Transverse colon (tissue), 4 donors: ENCODE measurements at regions of chr20 and their contacts with region 1.

Region 1: DNA sequence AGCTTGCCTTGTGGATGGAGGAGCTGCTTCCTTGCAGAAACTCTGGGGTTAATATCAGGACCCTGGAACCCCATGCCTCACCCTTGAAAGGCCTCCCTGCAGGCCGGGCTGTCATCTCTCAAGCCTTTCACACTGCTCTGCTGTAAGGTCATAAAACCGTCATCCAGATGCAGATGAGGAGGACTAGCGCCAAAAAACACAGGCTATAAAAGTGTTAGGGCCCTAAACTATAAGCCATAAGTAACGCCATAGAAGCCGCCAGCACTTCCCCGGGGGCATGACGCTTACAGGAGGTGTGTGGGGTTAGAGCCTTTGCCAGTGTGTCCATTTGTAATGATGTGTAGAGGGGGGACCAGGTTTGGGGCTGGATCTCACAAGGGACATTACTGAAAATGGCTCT is 47.6 kb downstream of the CDH4 start:
- DNase-seq: no peak
- H3K4me3 ChIP-seq: no peak overlapping the region
- H3K27ac ChIP-seq: no peak overlapping the region
- H3K4me1 ChIP-seq: peaks cover 0 to 6% (median 0%) of the 10 kb centered on the region in 4 donors
- H3K27me3 ChIP-seq: no peaks in the 10 kb centered on the region
- CTCF ChIP-seq: no peak
- EP300 ChIP-seq: no peak
- POLR2A ChIP-seq: no peak

Region 2: GRCh38 chr20:60977901-60978300 is 321.7 kb before region 1 on chr20:
- in situ Hi-C with region 1: no loop called
- intact Hi-C with region 1: no loop called
- DNase-seq: no peak
- H3K4me3 ChIP-seq: no peak overlapping the region
- H3K27ac ChIP-seq: no peak overlapping the region
- H3K4me1 ChIP-seq: no peaks in the 10 kb centered on the region
- H3K27me3 ChIP-seq: no peaks in the 10 kb centered on the region
- CTCF ChIP-seq: no peak
- EP300 ChIP-seq: no peak
- POLR2A ChIP-seq: no peak

Region 3: DNA sequence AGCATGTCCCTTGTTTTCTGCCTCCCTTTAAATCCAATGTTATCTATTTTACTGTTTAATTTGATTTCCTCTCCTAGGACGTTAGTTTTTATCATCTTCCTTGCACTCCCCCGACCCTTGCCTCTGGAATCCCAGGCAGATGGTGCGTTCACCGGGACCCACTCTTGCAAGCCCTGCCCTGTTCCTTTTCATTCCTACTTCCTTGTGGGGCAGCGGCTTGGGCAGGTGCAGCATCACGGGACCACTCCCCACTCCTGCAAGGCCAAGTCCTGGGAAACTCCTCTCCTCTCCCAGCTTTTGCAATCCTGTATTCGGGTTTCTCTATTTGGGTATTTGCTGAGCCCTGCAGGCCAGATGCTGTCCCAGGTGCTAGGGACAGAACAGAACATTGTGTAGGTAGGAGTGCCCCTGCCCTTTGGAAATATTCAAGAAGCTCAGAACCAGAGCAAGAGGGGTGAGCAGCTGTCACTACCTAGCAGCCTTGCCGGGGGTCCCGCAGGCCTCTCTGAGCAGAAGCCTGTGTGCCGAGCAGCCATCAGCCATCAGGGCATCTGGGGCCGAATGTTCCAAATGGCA is 53.3 kb before region 1 on chr20:
- in situ Hi-C with region 1: no loop called
- intact Hi-C with region 1: loop called (anchors 10 kb)
- DNase-seq: no peak
- H3K4me3 ChIP-seq: no peak overlapping the region
- H3K27ac ChIP-seq: no peak overlapping the region
- H3K4me1 ChIP-seq: no peaks in the 10 kb centered on the region
- H3K27me3 ChIP-seq: peaks cover 42% of the 10 kb centered on the region
- CTCF ChIP-seq: no peak
- EP300 ChIP-seq: no peak
- POLR2A ChIP-seq: no peak